ENCODE measurements at regions of chr5 and their contacts with region 1.

Region 1: DNA sequence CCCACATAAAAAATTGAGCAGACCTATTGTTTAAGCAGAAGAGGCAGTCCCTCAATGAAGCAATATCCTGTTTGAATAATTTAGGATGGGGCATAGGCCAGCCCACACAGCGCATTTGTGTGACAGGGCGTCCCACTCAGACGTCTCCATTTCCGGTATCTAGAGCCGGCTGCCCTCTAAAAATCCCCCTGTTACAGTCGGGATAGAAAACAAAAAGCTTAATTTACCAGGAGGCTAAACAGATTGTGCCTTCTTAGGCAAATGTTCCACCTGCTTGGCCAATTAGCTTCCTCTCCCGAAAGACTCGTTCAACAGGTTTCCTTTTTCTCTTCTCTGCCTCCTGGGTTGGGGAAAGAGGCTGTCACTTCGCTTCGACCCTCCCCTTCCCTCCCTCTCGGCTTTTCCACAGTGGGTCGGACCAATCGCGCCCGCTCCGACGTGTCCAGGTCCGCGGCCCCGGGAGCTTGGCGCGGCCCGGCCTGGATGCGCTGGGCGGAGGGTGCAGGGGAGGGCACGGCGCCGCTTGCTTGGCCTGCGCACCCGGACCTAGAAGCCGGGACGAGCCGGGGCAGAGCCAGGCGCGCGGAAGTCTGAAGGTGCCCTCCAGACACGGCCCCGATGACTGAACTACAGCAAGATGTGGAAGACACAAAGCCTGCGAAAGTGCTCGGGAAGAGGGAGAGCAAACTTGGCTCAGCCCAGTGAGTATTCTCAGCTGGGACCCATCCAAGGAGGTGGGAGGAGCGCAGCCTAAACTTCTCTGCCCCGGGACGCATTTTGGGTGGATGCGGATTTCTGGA is at the start of gene GRAMD2B:
- DNase-seq: peak; percentile 27 to 80 (median 76)
- ATAC-seq: peak; percentile 96
- H3K4me3 ChIP-seq: peak within 1 kb of the TSS; percentile 78
- H3K4me3 Mint-ChIP-seq: peak within 1 kb of the TSS; percentile 85 to 94 (median 94)
- H3K27ac ChIP-seq: peak within 1 kb of the TSS; percentile 100
- H3K27ac Mint-ChIP-seq: peak within 1 kb of the TSS; percentile 85 to 96 (median 95)
- H3K4me1 ChIP-seq: peaks cover 8 to 13% of the 10 kb centered on the region in 2 donors
- H3K4me1 Mint-ChIP-seq: peaks cover 22 to 42% (median 33%) of the 10 kb centered on the region in 7 donors
- H3K27me3 ChIP-seq: no peaks in the 10 kb centered on the region
- H3K27me3 Mint-ChIP-seq: no peaks in the 10 kb centered on the region
- total RNA-seq, gene GRAMD2B: 5.2 to 9.6 (median 7.1) TPM

Region 2: GRCh38 chr5:126449751-126450271 is 26.6 kb after region 1 on chr5:
- CTCF ChIA-PET with region 1: no interaction called
- POLR2A ChIA-PET with region 1: interaction called, 73 read pairs
- intact Hi-C with region 1: loop called (anchors 1 kb)
- DNase-seq: peak in 8 of 9 donors; percentile 48 to 75 (median 64)
- ATAC-seq: peak; percentile 87
- H3K4me3 ChIP-seq: peak overlapping the region; percentile 47
- H3K4me3 Mint-ChIP-seq: peak overlapping the region; percentile 75 to 94 (median 88)
- H3K27ac ChIP-seq: peak overlapping the region; percentile 77
- H3K27ac Mint-ChIP-seq: peak overlapping the region; percentile 96 to 100 (median 99)
- H3K4me1 ChIP-seq: peaks cover 11 to 57% of the 10 kb centered on the region in 2 donors
- H3K4me1 Mint-ChIP-seq: peaks cover 32 to 90% (median 75%) of the 10 kb centered on the region in 7 donors
- H3K27me3 ChIP-seq: no peaks in the 10 kb centered on the region
- H3K27me3 Mint-ChIP-seq: no peaks in the 10 kb centered on the region

Region 3: GRCh38 chr5:126490167-126490940 is 67.2 kb after region 1 on chr5:
- CTCF ChIA-PET with region 1: no interaction called
- POLR2A ChIA-PET with region 1: interaction called, 3 read pairs
- intact Hi-C with region 1: loop called in 1 of 2 experiments (anchors 5 kb)
- DNase-seq: no peak
- ATAC-seq: no peak
- H3K4me3 ChIP-seq: no peak overlapping the region
- H3K4me3 Mint-ChIP-seq: no peak overlapping the region
- H3K27ac ChIP-seq: no peak overlapping the region
- H3K27ac Mint-ChIP-seq: peak overlapping the region in 7 of 9 donors; percentile 2 to 91 (median 38)
- H3K4me1 ChIP-seq: no peaks in the 10 kb centered on the region
- H3K4me1 Mint-ChIP-seq: peaks cover 0 to 10% (median 0%) of the 10 kb centered on the region in 7 donors
- H3K27me3 ChIP-seq: no peaks in the 10 kb centered on the region
- H3K27me3 Mint-ChIP-seq: no peaks in the 10 kb centered on the region

Region 4: DNA sequence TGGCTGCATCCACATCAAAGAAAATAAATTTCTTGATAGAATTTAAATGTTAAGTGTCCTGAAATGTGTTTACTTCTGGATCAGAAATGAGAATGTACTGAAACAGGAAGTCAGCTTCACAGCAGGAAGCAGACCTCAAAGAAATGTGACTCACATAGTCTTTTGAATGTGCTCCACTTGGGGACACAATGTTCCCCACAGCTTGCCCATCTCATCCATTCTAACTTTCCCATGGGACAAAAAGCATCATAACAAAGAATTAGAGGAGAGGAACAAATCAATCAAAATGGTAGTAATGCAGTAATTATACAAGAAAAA is 85.7 kb after region 1 on chr5:
- CTCF ChIA-PET with region 1: no interaction called
- POLR2A ChIA-PET with region 1: interaction called, 4 read pairs
- intact Hi-C with region 1: loop called (anchors 2 to 5 kb)
- DNase-seq: peak in 6 of 9 donors; percentile 17 to 68 (median 49)
- ATAC-seq: peak; percentile 81
- H3K4me3 ChIP-seq: peak overlapping the region; percentile 11
- H3K4me3 Mint-ChIP-seq: peak overlapping the region; percentile 36 to 91 (median 83)
- H3K27ac ChIP-seq: peak overlapping the region; percentile 64
- H3K27ac Mint-ChIP-seq: peak overlapping the region; percentile 77 to 97 (median 93)
- H3K4me1 ChIP-seq: peaks cover 5 to 39% of the 10 kb centered on the region in 2 donors
- H3K4me1 Mint-ChIP-seq: peaks cover 11 to 75% (median 65%) of the 10 kb centered on the region in 7 donors
- H3K27me3 ChIP-seq: no peaks in the 10 kb centered on the region
- H3K27me3 Mint-ChIP-seq: no peaks in the 10 kb centered on the region

Region 5: GRCh38 chr5:126594676-126595485 is 171.7 kb after region 1 on chr5 and contains the start of gene ALDH7A1:
- CTCF ChIA-PET with region 1: no interaction called
- POLR2A ChIA-PET with region 1: no interaction called
- intact Hi-C with region 1: loop called (anchors 5 to 10 kb)
- DNase-seq: peak; percentile 6 to 36 (median 24)
- ATAC-seq: peak; percentile 78
- H3K4me3 ChIP-seq: peak within 1 kb of the TSS; percentile 64
- H3K4me3 Mint-ChIP-seq: peak within 1 kb of the TSS; percentile 81 to 95 (median 88)
- H3K27ac ChIP-seq: no peak within 1 kb of the TSS
- H3K27ac Mint-ChIP-seq: peak within 1 kb of the TSS in 8 of 9 donors; percentile 9 to 69 (median 36)
- H3K4me1 ChIP-seq: peaks cover 0 to 9% of the 10 kb centered on the region in 2 donors
- H3K4me1 Mint-ChIP-seq: peaks cover 8 to 23% (median 15%) of the 10 kb centered on the region in 7 donors
- H3K27me3 ChIP-seq: peaks cover 0 to 7% of the 10 kb centered on the region in 2 donors
- H3K27me3 Mint-ChIP-seq: peaks cover 0 to 43% (median 12%) of the 10 kb centered on the region in 5 donors
- total RNA-seq, gene ALDH7A1: 0.51 to 3.4 (median 2.3) TPM

Region 6: DNA sequence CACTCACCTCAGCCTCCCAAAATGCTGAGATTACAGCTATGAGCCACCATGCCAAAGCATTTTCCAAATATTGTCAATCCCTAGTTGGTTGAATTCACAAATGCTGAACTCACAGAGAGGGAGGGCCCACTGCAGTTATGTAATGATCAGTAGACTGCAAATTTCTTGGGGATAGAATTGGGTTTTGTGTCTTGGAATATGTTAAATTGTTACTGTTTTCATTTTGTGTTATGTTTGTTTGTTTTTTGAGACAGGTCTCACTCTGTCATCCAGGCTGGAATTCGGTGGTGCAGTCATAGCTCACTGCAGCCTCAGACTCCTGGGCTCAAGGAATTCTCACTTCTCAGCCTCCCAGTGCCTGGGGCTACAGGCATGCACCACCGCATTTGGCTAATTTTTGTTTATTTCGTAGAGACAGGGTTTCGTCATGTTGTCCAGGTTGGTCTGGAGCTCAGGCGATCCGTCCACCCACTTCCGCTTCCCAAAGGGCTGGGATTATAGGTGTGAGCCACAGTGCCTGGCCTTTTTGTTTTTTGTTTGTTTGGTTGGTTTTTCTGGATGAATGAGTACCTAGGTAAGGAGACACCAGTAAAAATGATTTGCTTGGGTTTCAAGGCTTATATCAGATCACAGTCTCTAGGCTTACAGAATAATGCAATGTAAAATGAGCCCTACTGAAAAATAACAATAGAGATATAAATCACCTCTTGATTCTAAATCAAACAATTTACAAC is 322.2 kb after region 1 on chr5:
- CTCF ChIA-PET with region 1: no interaction called
- POLR2A ChIA-PET with region 1: no interaction called
- intact Hi-C with region 1: no loop called
- DNase-seq: no peak
- ATAC-seq: no peak
- H3K4me3 ChIP-seq: no peak overlapping the region
- H3K4me3 Mint-ChIP-seq: no peak overlapping the region
- H3K27ac ChIP-seq: no peak overlapping the region
- H3K27ac Mint-ChIP-seq: peak overlapping the region in 1 of 9 donors; percentile 26
- H3K4me1 ChIP-seq: peaks cover 4 to 13% of the 10 kb centered on the region in 2 donors
- H3K4me1 Mint-ChIP-seq: peaks cover 11 to 30% (median 19%) of the 10 kb centered on the region in 7 donors
- H3K27me3 ChIP-seq: no peaks in the 10 kb centered on the region
- H3K27me3 Mint-ChIP-seq: peaks cover 0 to 4% (median 0%) of the 10 kb centered on the region in 5 donors